ENCODE measurements at regions of chr5 and their contacts with region 1.

Region 1: DNA sequence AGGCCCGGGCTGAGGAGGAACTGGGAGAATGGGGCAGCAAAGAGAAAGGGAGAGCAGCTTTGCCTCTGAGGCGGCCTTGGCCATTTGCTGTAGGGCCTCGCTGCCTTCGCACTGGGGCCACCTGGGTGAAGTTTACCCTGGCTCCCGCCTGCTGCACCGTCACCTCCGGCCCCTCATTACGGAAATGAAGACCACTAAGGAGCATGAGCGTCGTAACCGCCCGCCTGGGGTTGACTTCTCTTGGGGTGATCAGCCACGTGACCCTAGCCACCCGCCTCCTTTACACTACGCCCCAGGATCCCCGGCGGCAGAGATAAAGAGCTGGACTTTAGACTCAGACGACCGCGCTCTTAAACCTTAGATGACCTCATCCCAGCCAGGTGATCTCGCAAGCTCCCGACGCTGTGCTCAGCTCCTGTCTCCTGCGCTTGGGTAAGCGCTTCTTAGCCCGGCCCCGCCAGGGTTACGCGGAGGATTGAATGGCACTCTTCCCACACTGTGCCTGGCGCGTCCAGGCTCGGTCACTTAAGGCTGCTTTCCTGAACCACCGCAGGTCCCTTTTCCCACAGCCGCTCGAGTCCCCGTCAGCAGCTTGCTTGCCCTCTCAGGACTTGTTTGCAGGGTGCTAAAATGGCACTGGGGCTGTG is 107.9 kb upstream of the LARP1 start:
- DNase-seq: no peak
- H3K4me3 ChIP-seq: peak overlapping the region; percentile 8 to 21
- H3K27ac ChIP-seq: no peak overlapping the region
- H3K4me1 ChIP-seq: peaks cover 3% of the 10 kb centered on the region
- H3K27me3 ChIP-seq: no peaks in the 10 kb centered on the region
- CTCF ChIP-seq: no peak
- POLR2A ChIP-seq: no peak

Region 2: GRCh38 chr5:153504726-153505125 is 1142.5 kb before region 1 on chr5:
- intact Hi-C with region 1: no loop called
- DNase-seq: no peak
- H3K4me3 ChIP-seq: no peak overlapping the region
- H3K27ac ChIP-seq: no peak overlapping the region
- H3K4me1 ChIP-seq: no peaks in the 10 kb centered on the region
- H3K27me3 ChIP-seq: no peaks in the 10 kb centered on the region
- CTCF ChIP-seq: no peak
- POLR2A ChIP-seq: no peak

Region 3: GRCh38 chr5:154334406-154335064 is 312.7 kb before region 1 on chr5:
- intact Hi-C with region 1: no loop called
- DNase-seq: no peak
- H3K4me3 ChIP-seq: no peak overlapping the region
- H3K27ac ChIP-seq: no peak overlapping the region
- H3K4me1 ChIP-seq: no peaks in the 10 kb centered on the region
- H3K27me3 ChIP-seq: no peaks in the 10 kb centered on the region
- CTCF ChIP-seq: no peak
- POLR2A ChIP-seq: no peak

Region 4: GRCh38 chr5:154811653-154812365 is 164.6 kb after region 1 on chr5:
- intact Hi-C with region 1: loop called (anchors 2 kb)
- DNase-seq: peak; percentile 32
- H3K4me3 ChIP-seq: no peak overlapping the region
- H3K27ac ChIP-seq: no peak overlapping the region
- H3K4me1 ChIP-seq: no peaks in the 10 kb centered on the region
- H3K27me3 ChIP-seq: no peaks in the 10 kb centered on the region
- CTCF ChIP-seq: peak; percentile 40 to 90 (median 70)
- POLR2A ChIP-seq: no peak

Measured in prostate gland (tissue), 2 donors.